ENCODE measurements at regions of chr7 and their contacts with region 1.

Region 1: GRCh38 chr7:152025077-152025936 is at the start of gene GALNT11:
- DNase-seq: peak; percentile 79
- H3K4me3 ChIP-seq: peak within 1 kb of the TSS; percentile 80 to 89 (median 84)
- H3K27ac ChIP-seq: peak within 1 kb of the TSS; percentile 75
- H3K4me1 ChIP-seq: peaks cover 5% of the 10 kb centered on the region
- H3K27me3 ChIP-seq: no peaks in the 10 kb centered on the region
- CTCF ChIP-seq: peak in 1 of 2 donors; percentile 41
- total RNA-seq, gene GALNT11: 28.4 to 49.2 TPM

Region 2: GRCh38 chr7:151936207-151936606 is 89.1 kb before region 1 on chr7:
- CTCF ChIA-PET with region 1: no interaction called
- dilution Hi-C with region 1: no loop called
- in situ Hi-C with region 1: no loop called
- intact Hi-C with region 1: loop called (anchors 5 kb)
- DNase-seq: no peak
- H3K4me3 ChIP-seq: no peak overlapping the region
- H3K27ac ChIP-seq: no peak overlapping the region
- H3K4me1 ChIP-seq: peaks cover 16% of the 10 kb centered on the region
- H3K27me3 ChIP-seq: no peaks in the 10 kb centered on the region
- CTCF ChIP-seq: no peak

Region 3: GRCh38 chr7:152128741-152129461 is 103.6 kb after region 1 on chr7:
- CTCF ChIA-PET with region 1: no interaction called
- dilution Hi-C with region 1: loop called (anchors 5 kb)
- in situ Hi-C with region 1: no loop called
- intact Hi-C with region 1: no loop called
- DNase-seq: no peak
- H3K4me3 ChIP-seq: no peak overlapping the region
- H3K27ac ChIP-seq: no peak overlapping the region
- H3K4me1 ChIP-seq: no peaks in the 10 kb centered on the region
- H3K27me3 ChIP-seq: no peaks in the 10 kb centered on the region
- CTCF ChIP-seq: no peak

Measured in mammary epithelial cell (primary cell).